ENCODE measurements at regions of chr2 and their contacts with region 1.

Region 1: GRCh38 chr2:136238286-136239078 is 120.5 kb upstream of the CXCR4 start:
- DNase-seq: peak; percentile 78
- ATAC-seq: peak; percentile 89
- H3K4me3 ChIP-seq: no peak overlapping the region
- H3K27ac ChIP-seq: no peak overlapping the region
- H3K4me1 ChIP-seq: peaks cover 18% of the 10 kb centered on the region
- H3K27me3 ChIP-seq: no peaks in the 10 kb centered on the region
- CTCF ChIP-seq: no peak
- EP300 ChIP-seq: peak; percentile 97 to 99
- POLR2A ChIP-seq: no peak
- RAD21 ChIP-seq: no peak

Region 2: DNA sequence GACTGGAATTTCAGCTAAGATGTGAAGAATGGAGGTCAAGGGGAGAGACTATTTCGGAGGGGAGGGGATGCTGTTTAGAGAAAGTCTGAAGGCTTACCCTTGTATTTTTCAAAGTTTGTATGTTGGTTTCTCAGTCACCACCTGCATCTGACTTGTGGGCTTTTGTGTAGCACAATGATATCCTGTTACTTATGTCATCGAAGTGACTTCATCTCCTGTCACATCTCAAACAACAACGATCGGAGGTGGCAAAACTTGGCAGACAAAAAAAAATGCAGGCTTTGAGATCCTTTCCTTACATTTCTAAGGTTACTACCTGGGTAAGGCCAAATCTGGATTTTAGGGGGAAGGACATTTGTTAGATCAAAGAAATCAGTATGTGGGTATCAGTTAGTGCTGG is 108.9 kb before region 1 on chr2:
- CTCF ChIA-PET with region 1: interaction called, 3 read pairs
- POLR2A ChIA-PET with region 1: interaction called, 4 read pairs
- RAD21 ChIA-PET with region 1: interaction called, 58 read pairs
- SMC1A ChIA-PET with region 1: interaction called, 51 read pairs
- in situ Hi-C with region 1: no loop called
- intact Hi-C with region 1: loop called (anchors 5 kb)
- DNase-seq: no peak
- ATAC-seq: no peak
- H3K4me3 ChIP-seq: no peak overlapping the region
- H3K27ac ChIP-seq: no peak overlapping the region
- H3K4me1 ChIP-seq: peaks cover 24% of the 10 kb centered on the region
- H3K27me3 ChIP-seq: peaks cover 0 to 9% of the 10 kb centered on the region in 2 experiments; a peak in 2 of 4 replicates
- CTCF ChIP-seq: no peak
- EP300 ChIP-seq: peak in 1 of 2 experiments; percentile 73; a peak in 2 of 4 replicates
- POLR2A ChIP-seq: no peak
- RAD21 ChIP-seq: no peak

Region 3: GRCh38 chr2:136217996-136218395 is 20.5 kb before region 1 on chr2:
- CTCF ChIA-PET with region 1: interaction called, 23 read pairs
- POLR2A ChIA-PET with region 1: interaction called, 56 read pairs
- RAD21 ChIA-PET with region 1: interaction called, 39 read pairs
- SMC1A ChIA-PET with region 1: interaction called, 105 read pairs
- in situ Hi-C with region 1: no loop called
- intact Hi-C with region 1: no loop called
- DNase-seq: no peak
- ATAC-seq: peak; percentile 77
- H3K4me3 ChIP-seq: no peak overlapping the region
- H3K27ac ChIP-seq: no peak overlapping the region
- H3K4me1 ChIP-seq: no peaks in the 10 kb centered on the region
- H3K27me3 ChIP-seq: peaks cover 0 to 9% of the 10 kb centered on the region in 2 experiments; a peak in 1 of 4 replicates
- CTCF ChIP-seq: no peak
- EP300 ChIP-seq: peak in 1 of 2 experiments; percentile 40; a peak in 1 of 4 replicates
- POLR2A ChIP-seq: no peak
- RAD21 ChIP-seq: no peak

Region 4: GRCh38 chr2:136225950-136226835 is 12.3 kb before region 1 on chr2:
- CTCF ChIA-PET with region 1: interaction called, 23 read pairs
- POLR2A ChIA-PET with region 1: interaction called, 39 read pairs
- RAD21 ChIA-PET with region 1: interaction called, 37 read pairs
- SMC1A ChIA-PET with region 1: interaction called, 105 read pairs
- in situ Hi-C with region 1: no loop called
- intact Hi-C with region 1: no loop called
- DNase-seq: no peak
- ATAC-seq: peak; percentile 93
- H3K4me3 ChIP-seq: no peak overlapping the region
- H3K27ac ChIP-seq: no peak overlapping the region
- H3K4me1 ChIP-seq: no peaks in the 10 kb centered on the region; the same call in 1 of the 2 replicates
- H3K27me3 ChIP-seq: no peaks in the 10 kb centered on the region
- CTCF ChIP-seq: peak in 1 of 3 experiments; percentile 7; a peak in 1 of 6 replicates
- EP300 ChIP-seq: peak; percentile 96 to 97
- POLR2A ChIP-seq: no peak
- RAD21 ChIP-seq: 0 out of 2 replicates have a peak, but pooled peaks have one; percentile 3

Region 5: DNA sequence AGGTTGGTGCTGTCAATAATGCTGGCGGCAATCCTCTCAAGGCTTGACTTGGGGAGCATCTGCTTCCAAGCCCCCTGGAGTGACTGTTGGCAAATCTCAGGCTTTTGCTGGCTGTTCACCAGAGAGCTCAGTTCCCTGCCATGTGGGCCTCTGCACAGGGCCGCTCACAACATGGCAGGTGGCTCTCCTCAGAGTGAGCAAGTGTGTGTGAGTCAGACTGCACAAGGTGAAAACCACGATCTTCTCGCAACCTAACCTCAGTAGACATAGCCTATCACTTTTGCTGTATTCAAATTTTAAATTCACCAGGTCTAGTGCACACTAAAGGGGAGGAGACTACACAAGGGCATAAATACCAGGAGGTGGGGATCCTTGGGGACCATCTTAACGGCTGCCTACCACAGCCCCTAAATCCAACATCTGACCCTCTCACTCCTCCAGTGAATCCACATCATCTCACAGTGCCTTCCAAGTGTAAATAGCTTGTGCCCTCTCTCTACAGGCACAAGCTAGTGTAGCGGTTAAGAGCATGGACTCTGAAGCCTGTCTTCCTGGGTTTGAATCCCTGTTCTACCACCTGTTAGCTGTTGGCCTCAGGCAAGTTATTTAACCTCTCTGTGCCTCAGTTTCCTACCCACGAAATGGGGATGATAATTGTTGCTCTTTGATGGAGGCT is 67.2 kb after region 1 on chr2:
- CTCF ChIA-PET with region 1: no interaction called
- POLR2A ChIA-PET with region 1: interaction called, 4 read pairs
- RAD21 ChIA-PET with region 1: interaction called, 11 read pairs
- SMC1A ChIA-PET with region 1: interaction called, 14 read pairs
- in situ Hi-C with region 1: no loop called
- intact Hi-C with region 1: no loop called
- DNase-seq: no peak
- ATAC-seq: peak; percentile 93
- H3K4me3 ChIP-seq: no peak overlapping the region
- H3K27ac ChIP-seq: no peak overlapping the region
- H3K4me1 ChIP-seq: peaks cover 6% of the 10 kb centered on the region
- H3K27me3 ChIP-seq: peaks cover 0 to 5% of the 10 kb centered on the region in 2 experiments; a peak in 1 of 4 replicates
- CTCF ChIP-seq: no peak
- EP300 ChIP-seq: peak; percentile 62 to 64; a peak in 1 of 4 replicates
- POLR2A ChIP-seq: no peak
- RAD21 ChIP-seq: no peak

Region 6: GRCh38 chr2:136344339-136344738 is 105.9 kb after region 1 on chr2:
- CTCF ChIA-PET with region 1: no interaction called
- POLR2A ChIA-PET with region 1: no interaction called
- RAD21 ChIA-PET with region 1: no interaction called
- SMC1A ChIA-PET with region 1: no interaction called
- in situ Hi-C with region 1: no loop called
- intact Hi-C with region 1: no loop called
- DNase-seq: no peak
- ATAC-seq: no peak
- H3K4me3 ChIP-seq: no peak overlapping the region
- H3K27ac ChIP-seq: no peak overlapping the region
- H3K4me1 ChIP-seq: no peaks in the 10 kb centered on the region
- H3K27me3 ChIP-seq: 0 out of 4 replicates have a peak, but pooled peaks cover 0 to 2% of the 10 kb centered on the region in 2 experiments
- CTCF ChIP-seq: no peak
- EP300 ChIP-seq: no peak
- POLR2A ChIP-seq: no peak
- RAD21 ChIP-seq: no peak

Measured in GM12878 (cell line).